ENCODE measurements at regions of chr11 and their contacts with region 1.

Region 1: DNA sequence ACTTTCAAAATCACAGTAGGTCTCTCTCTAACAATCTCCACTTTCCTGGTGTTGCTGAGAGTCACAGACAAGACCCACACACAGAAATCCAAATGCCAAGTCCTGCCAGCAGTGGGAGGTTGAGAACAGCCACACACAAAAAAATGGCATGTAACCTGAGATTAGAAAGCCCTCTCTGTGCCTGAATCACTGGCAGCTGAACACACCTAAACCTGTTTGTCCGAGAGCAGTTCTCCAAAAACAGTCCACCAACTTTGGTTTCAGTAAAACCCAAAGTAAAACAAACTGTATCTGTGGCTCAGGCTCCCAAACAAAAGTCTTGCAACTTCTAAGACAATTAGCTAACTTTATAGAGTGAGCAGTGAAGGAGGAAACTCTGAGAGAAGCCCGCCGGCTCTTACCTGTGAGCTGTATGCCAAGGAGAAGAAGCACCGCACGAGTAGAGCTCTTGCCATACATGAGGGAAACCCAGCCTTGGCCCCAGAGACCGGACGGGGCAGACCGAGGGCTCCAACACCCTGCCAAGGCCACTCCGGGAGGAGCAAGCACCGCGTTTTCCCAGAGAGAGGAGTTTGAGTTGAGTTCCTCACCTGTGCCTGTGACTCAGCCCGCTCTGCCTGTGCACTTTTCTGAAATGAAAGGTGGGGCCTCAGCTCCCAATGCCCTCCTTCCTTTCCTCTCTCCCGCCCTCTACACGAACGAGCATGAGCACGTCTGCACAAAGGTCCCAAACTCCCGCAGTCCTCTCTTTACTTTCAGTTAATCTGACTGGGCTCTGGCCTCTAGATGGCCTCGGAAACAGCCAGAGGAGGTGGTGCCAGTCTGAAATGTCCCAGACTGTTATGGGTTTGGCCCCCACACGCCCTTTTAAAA is at the start of gene MPZL2:
- DNase-seq: peak; percentile 90 to 93
- H3K4me3 ChIP-seq: peak within 1 kb of the TSS; percentile 83
- H3K4me3 Mint-ChIP-seq: peak within 1 kb of the TSS; percentile 91
- H3K27ac Mint-ChIP-seq: peak within 1 kb of the TSS; percentile 96
- H3K4me1 ChIP-seq: peaks cover 23% of the 10 kb centered on the region; the same call in 1 of the 2 replicates
- H3K4me1 Mint-ChIP-seq: peaks cover 15% of the 10 kb centered on the region
- H3K27me3 ChIP-seq: no peaks in the 10 kb centered on the region
- H3K27me3 Mint-ChIP-seq: no peaks in the 10 kb centered on the region
- CTCF ChIP-seq: peak; percentile 30 to 59
- total RNA-seq, gene MPZL2: 69.9 and 80.2 TPM in 2 replicates

Region 2: DNA sequence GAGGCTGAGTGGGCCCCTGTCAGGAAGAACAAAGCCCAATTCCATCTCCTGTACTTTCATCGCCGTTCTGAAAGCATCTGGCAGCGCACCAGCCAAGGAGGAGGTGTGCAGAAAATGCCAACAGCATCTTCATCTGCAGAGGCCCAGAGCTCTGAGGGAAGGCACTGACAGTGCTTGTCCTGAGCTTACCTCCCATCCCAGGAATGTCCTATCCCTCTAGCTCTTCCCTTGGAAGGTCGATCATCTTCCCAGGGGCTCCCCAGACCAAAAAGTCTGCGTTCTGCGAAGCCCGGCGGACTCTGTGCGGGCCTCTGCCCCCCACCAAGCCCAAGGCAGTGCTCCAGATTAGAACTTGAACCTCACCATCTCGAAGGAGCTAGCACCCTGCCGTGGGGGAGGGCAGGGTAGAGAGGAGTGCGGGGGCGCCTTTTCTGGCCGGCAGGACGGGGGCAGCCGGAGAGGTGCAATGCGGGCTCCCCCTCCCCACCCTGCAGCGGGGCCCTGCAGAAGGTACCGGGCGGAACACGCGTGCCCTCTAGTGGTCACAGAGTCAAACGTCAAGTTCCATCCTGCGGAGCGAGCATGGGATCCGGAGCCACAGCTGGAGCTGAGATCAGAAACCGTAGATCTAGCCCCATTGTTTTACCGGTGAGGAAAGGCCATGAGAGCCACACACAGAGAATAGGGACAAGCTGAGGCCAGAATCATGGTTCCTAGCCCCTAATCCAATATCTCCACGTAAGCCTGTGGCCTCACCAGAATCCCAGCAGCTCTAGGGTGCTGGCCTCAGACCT is 92.5 kb before region 1 on chr11:
- CTCF ChIA-PET with region 1: interaction called, 11 read pairs
- POLR2A ChIA-PET with region 1: no interaction called
- intact Hi-C with region 1: no loop called
- DNase-seq: peak; percentile 82 to 89
- H3K4me3 ChIP-seq: no peak overlapping the region
- H3K4me3 Mint-ChIP-seq: no peak overlapping the region
- H3K27ac Mint-ChIP-seq: no peak overlapping the region
- H3K4me1 ChIP-seq: peaks cover 3% of the 10 kb centered on the region; the same call in 1 of the 2 replicates
- H3K4me1 Mint-ChIP-seq: peaks cover 24% of the 10 kb centered on the region
- H3K27me3 ChIP-seq: no peaks in the 10 kb centered on the region; the same call in 1 of the 2 replicates
- H3K27me3 Mint-ChIP-seq: no peaks in the 10 kb centered on the region
- CTCF ChIP-seq: peak; percentile 98 to 99

Region 3: GRCh38 chr11:118240999-118241768 is 22.7 kb before region 1 on chr11:
- CTCF ChIA-PET with region 1: interaction called, 6 read pairs
- POLR2A ChIA-PET with region 1: interaction called, 3 read pairs
- intact Hi-C with region 1: loop called (anchors 1 kb)
- DNase-seq: peak; percentile 68 to 71
- H3K4me3 ChIP-seq: no peak overlapping the region
- H3K4me3 Mint-ChIP-seq: peak overlapping the region; percentile 42
- H3K27ac Mint-ChIP-seq: peak overlapping the region; percentile 82
- H3K4me1 ChIP-seq: peaks cover 69% of the 10 kb centered on the region
- H3K4me1 Mint-ChIP-seq: peaks cover 65% of the 10 kb centered on the region
- H3K27me3 ChIP-seq: no peaks in the 10 kb centered on the region
- H3K27me3 Mint-ChIP-seq: no peaks in the 10 kb centered on the region
- CTCF ChIP-seq: no peak

Region 4: GRCh38 chr11:118290923-118291322 is 27.0 kb after region 1 on chr11:
- CTCF ChIA-PET with region 1: interaction called, 11 read pairs
- POLR2A ChIA-PET with region 1: interaction called, 3 read pairs
- intact Hi-C with region 1: loop called (anchors 1 kb)
- DNase-seq: peak; percentile 80 to 82
- H3K4me3 ChIP-seq: no peak overlapping the region
- H3K4me3 Mint-ChIP-seq: no peak overlapping the region
- H3K27ac Mint-ChIP-seq: no peak overlapping the region
- H3K4me1 ChIP-seq: peaks cover 9% of the 10 kb centered on the region
- H3K4me1 Mint-ChIP-seq: peaks cover 24% of the 10 kb centered on the region
- H3K27me3 ChIP-seq: no peaks in the 10 kb centered on the region
- H3K27me3 Mint-ChIP-seq: no peaks in the 10 kb centered on the region
- CTCF ChIP-seq: peak; percentile 61 to 70

Region 5: GRCh38 chr11:118353084-118353710 is 89.3 kb after region 1 on chr11:
- CTCF ChIA-PET with region 1: interaction called, 4 read pairs
- POLR2A ChIA-PET with region 1: no interaction called
- intact Hi-C with region 1: loop called (anchors 2 kb)
- DNase-seq: peak in 1 of 2 experiments; percentile 47
- H3K4me3 ChIP-seq: no peak overlapping the region
- H3K4me3 Mint-ChIP-seq: no peak overlapping the region
- H3K27ac Mint-ChIP-seq: no peak overlapping the region
- H3K4me1 ChIP-seq: peaks cover 8% of the 10 kb centered on the region; the same call in 1 of the 2 replicates
- H3K4me1 Mint-ChIP-seq: peaks cover 9% of the 10 kb centered on the region
- H3K27me3 ChIP-seq: no peaks in the 10 kb centered on the region
- H3K27me3 Mint-ChIP-seq: no peaks in the 10 kb centered on the region
- CTCF ChIP-seq: peak; percentile 55 to 81